Astrocyte of the cerebellum (primary cell): ENCODE measurements at regions of chr18 and their contacts with region 1.

Region 1: DNA sequence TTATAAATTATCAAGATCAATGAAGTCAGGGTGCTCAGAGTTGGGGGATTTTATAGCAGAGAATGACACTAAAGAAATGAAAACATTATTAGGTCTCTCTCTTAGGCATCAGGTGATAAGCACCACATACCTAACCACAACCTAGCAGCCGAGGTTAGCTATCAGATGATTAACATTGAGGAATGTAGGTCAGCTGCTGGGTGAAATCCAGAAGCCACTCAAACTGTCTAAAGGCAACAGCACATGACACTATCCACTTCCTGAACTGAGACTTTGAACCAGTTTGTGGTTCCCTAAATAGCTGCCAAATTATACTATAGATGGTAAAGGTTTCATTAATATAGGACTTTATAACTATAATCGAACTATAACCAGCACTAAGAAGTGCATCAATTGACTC is 4.7 kb downstream of the EPG5 start:
- DNase-seq: peak; percentile 45
- H3K4me3 ChIP-seq: no peak overlapping the region
- CTCF ChIP-seq: no peak

Region 2: DNA sequence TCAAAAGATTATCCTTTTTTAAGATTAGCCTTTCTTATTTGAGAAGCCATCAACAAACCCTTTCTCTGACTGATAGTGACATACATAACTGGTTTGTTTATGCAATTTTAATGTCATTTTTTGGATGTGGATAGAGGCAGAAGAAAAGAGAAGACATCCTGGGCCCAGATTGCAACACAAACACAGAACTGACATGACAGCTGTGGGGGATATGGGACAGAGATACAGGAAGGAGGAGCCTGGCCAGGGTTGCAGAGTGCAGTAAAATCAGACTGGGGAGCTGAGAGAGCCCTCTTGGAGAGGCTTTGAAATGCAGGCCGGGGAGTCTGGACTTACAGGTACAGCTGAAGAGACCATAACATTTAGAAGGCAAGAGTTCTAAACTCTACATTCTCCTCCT is 71.9 kb before region 1 on chr18:
- in situ Hi-C with region 1: no loop called
- DNase-seq: no peak
- H3K4me3 ChIP-seq: no peak overlapping the region
- CTCF ChIP-seq: no peak

Region 3: GRCh38 chr18:45916302-45916701 is 46.2 kb before region 1 on chr18:
- in situ Hi-C with region 1: loop called (anchors 5 kb)
- DNase-seq: no peak
- H3K4me3 ChIP-seq: no peak overlapping the region
- CTCF ChIP-seq: no peak

Region 4: DNA sequence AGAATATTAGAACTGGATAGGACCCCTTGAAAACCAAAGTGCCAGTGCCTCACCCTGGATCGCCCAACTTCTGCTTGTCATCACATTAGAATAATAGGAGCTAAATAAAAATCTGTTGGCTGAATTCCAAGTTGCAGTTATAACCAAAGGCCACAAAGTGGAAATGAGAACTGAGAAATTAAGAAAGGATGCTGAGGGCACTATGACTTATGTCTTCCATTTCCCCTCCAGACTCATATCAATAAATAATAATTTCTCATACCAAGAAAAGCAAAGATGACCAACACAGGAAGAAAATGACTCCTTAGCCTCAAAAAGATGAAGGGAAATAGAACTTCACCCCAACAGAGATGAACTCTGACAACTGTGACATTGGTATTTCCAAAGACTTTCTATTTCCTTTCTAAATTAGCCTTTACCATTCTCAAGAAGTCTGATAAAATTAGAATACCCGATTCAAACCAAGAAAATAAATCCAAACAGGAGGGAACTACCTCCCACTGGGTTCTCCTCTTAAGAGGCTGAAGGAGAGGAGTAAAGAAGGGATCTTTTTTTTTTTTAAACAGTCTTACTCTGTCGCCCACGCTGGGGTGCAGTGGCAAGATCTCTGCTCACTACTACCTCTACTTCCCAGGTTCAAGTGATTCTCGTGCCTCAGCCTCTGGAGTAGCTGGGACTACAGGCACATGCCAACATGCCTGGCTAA is 51.2 kb after region 1 on chr18:
- in situ Hi-C with region 1: no loop called
- DNase-seq: no peak
- H3K4me3 ChIP-seq: no peak overlapping the region
- CTCF ChIP-seq: no peak

Region 5: DNA sequence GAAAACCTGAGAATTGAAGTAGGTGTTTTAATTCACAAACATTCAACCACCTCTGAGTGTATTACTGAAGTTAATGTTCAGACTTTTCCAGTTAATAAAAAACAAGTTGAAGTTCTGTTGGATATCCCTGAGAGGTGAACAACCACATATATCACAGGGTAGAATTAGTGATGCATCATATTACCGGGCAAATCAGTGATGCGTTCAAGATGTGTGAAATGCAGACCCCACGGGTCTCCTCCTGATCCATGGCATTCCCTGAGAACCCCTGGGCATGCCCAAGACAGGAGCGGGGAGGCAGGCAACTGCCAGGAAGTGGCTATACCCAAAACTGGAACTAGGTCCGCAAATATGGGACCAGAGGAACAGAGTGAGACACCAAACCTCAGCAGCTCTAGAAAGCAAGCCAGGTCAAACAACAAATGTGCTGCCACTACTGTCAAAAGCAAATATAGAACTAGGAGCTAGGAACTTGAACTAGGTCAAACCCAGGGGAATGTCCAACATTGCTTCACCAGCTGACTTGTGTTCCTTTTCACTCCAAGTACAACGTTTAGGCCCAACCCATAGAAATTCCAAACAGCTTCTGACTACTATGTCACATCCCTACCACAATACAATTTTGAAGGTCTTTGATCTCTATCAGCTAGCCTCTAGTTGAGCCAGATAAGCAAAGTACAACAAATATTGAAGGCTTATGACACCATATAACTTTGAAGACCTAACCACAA is 89.4 kb after region 1 on chr18:
- in situ Hi-C with region 1: loop called (anchors 5 kb)
- DNase-seq: no peak
- H3K4me3 ChIP-seq: no peak overlapping the region
- CTCF ChIP-seq: no peak